ENCODE measurements at regions of chrX and their contacts with region 1.

Region 1: GRCh38 chrX:47523297-47523696 is 37.7 kb upstream of the ARAF start:
- H3K4me3 ChIP-seq: peak overlapping the region; percentile 44
- H3K27ac ChIP-seq: no peak overlapping the region; the same call in 1 of the 2 replicates
- H3K4me1 ChIP-seq: no peaks in the 10 kb centered on the region
- CTCF ChIP-seq: peak; percentile 92

Region 2: DNA sequence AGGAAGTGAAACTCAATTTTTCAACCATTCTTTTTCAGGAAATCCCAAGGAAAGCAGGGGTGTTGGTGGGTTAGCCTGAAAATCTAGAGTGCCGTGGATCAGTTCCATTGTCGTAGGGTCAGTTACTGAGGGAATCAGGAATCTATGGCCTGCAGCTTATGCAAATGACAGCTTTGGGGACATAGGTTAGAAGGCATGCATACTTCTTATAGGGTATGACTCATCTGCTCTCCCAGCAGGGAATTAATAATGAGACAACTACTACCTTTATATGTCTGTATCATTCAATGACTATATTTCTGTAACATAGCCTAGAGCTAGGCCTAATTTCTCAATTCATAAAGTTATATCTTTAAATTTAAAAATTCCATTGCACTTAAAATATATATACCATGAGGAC is 76.9 kb before region 1 on chrX:
- CTCF ChIA-PET with region 1: no interaction called
- POLR2A ChIA-PET with region 1: interaction called, 10 read pairs
- H3K4me3 ChIP-seq: no peak overlapping the region
- H3K27ac ChIP-seq: no peak overlapping the region
- H3K4me1 ChIP-seq: no peaks in the 10 kb centered on the region
- CTCF ChIP-seq: no peak

Region 3: DNA sequence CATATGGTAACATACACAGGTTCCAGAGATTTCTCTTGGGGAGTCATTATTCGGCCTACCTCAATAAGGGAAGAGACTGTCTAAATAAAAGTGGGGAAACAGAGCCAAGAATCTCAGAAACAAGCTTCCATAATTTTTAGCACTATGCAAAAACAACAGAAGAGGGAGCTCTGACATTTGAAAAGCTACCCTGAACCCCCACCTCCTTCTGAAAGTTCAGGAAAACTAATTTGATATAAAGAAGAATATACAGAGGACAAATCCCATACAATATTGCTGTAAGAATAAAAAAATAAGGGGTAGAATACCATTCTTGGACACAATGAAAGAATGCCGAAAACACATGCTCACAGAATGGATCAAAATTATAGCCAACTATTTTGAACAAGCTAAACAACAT is 26.0 kb before region 1 on chrX:
- CTCF ChIA-PET with region 1: interaction called, 33 read pairs
- POLR2A ChIA-PET with region 1: interaction called, 3 read pairs
- H3K4me3 ChIP-seq: no peak overlapping the region
- H3K27ac ChIP-seq: no peak overlapping the region
- H3K4me1 ChIP-seq: no peaks in the 10 kb centered on the region
- CTCF ChIP-seq: 0 out of 2 replicates have a peak, but pooled peaks have one; percentile 7

Region 4: DNA sequence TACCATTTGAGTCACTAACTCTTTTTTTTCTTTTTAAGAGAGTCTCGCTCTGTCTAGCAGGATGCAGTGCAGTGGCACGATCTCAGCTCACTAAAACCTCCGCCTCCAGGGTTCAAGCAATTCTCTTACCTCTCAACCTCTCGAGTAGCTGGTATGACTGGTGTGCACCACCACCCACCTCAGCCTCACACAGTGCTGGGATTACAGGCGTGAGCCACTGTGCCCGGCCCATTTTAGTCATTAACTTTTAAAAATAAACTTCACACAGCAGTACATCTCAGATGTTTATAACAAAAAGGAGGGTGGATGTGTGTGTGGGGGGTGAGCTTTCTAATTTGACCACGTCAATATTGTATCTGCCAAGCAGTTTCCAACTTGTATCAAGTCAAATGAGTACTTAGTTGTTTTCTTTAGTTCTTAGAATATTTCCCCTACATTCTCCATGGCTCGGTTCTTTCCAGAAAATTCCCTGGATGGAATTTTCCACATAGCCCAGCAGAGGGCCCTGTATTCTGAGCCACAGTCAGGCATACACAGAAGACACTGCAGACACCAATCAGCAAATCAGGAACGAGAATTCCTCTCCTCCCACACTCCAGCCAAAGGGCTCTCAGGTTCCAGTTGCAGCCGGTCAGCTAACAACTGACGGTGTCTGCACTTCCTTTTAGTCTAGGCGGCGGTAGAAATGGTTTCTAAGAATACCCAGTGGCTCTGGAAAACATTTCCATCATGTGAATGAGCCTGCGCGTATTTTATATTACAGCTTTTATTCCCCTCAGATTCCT is 17.6 kb after region 1 on chrX:
- CTCF ChIA-PET with region 1: interaction called, 25 read pairs
- POLR2A ChIA-PET with region 1: no interaction called
- H3K4me3 ChIP-seq: no peak overlapping the region
- H3K27ac ChIP-seq: no peak overlapping the region
- H3K4me1 ChIP-seq: no peaks in the 10 kb centered on the region
- CTCF ChIP-seq: peak; percentile 59

Measured in HEK293 (cell line).